MCF 10A (cell line): ENCODE measurements at regions of chr15 and their contacts with region 1.

Region 1: DNA sequence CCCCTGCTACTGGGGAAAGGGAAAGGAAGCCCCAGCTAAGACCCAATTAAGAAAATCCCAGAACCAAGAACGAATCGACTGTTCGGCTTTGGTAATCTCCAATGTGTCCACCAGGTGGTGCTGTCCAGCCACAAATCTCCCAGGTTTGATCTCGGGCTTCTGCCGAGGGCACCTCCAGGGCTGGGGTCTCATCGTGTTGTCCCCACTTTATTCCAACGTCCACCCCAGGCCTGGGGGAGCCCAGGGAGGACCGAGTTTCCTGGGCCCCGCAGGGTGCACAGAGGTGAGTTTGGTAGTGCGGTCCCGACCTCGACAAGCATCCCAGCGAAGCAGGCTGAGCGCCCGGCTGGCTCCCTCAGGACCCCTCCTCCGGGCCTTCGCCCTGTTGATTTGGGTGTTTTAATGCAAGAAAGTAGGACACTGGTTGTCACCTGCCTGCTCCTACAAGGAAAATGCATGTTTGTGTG is 185.1 kb downstream of the GOLGA6L6 start:
- DNase-seq: peak; percentile 75
- H3K4me3 Mint-ChIP-seq: peak overlapping the region; percentile 35
- H3K27ac Mint-ChIP-seq: peak overlapping the region; percentile 16
- H3K4me1 Mint-ChIP-seq: peaks cover 6% of the 10 kb centered on the region
- H3K27me3 Mint-ChIP-seq: no peaks in the 10 kb centered on the region
- CTCF ChIP-seq: peak; percentile 98

Region 2: GRCh38 chr15:19944261-19944888 is 412.1 kb before region 1 on chr15:
- CTCF ChIA-PET with region 1: no interaction called
- POLR2A ChIA-PET with region 1: no interaction called
- intact Hi-C with region 1: no loop called
- DNase-seq: no peak
- H3K4me3 Mint-ChIP-seq: no peak overlapping the region
- H3K27ac Mint-ChIP-seq: no peak overlapping the region
- H3K4me1 Mint-ChIP-seq: no peaks in the 10 kb centered on the region
- H3K27me3 Mint-ChIP-seq: no peaks in the 10 kb centered on the region
- CTCF ChIP-seq: no peak

Region 3: DNA sequence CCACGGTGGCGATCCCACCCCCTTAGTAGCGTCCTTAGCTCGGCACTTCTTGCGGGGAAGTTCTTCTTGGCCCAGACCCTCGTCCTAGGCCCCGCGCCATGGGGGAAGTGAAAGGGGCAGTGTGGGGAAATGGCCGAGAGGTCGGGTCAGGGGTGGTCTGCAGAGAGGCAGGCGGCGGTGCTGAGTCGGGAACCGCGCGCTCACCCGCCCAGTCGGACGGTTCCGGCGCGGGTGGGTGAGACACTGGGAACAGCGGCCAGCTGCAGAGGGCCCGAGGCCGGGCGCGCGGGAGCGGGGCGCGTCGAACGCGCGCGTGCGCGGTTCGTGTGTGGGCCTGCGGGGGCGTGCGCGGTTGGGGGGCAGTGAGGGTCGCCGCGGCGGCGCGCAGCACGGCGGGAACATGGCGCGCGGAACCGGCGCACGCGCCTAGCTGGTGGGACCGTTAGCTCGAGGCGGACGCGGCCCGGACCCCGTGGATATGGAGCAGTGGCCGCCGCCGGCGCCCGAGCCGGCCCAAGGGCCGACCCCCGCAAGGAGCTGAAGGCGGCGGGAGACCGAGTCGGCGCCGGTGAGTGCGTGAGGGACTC is 61.7 kb before region 1 on chr15:
- CTCF ChIA-PET with region 1: no interaction called
- POLR2A ChIA-PET with region 1: no interaction called
- intact Hi-C with region 1: no loop called
- DNase-seq: no peak
- H3K4me3 Mint-ChIP-seq: no peak overlapping the region
- H3K27ac Mint-ChIP-seq: no peak overlapping the region
- H3K4me1 Mint-ChIP-seq: no peaks in the 10 kb centered on the region
- H3K27me3 Mint-ChIP-seq: no peaks in the 10 kb centered on the region
- CTCF ChIP-seq: no peak

Region 4: DNA sequence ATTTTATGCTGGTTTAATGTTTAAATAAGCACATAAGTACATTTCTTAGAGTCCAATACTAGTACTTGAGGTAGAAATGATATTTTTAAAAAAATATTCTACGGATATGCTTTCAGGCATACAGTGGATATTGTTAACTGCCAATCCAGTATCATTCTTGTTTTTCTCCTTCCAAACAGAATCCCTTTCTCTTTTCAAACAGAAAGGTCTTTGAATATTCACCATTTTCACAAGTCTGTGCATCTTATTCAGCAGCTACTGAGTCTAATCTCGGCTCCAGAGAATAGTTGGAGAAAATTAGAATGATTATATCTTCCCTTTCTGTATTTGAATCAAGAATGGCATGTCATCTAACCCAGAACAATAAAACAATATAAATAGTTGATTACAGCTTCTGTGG is 10.6 kb after region 1 on chr15:
- CTCF ChIA-PET with region 1: interaction called, 13 read pairs
- POLR2A ChIA-PET with region 1: no interaction called
- intact Hi-C with region 1: no loop called
- DNase-seq: no peak
- H3K4me3 Mint-ChIP-seq: no peak overlapping the region
- H3K27ac Mint-ChIP-seq: no peak overlapping the region
- H3K4me1 Mint-ChIP-seq: no peaks in the 10 kb centered on the region
- H3K27me3 Mint-ChIP-seq: no peaks in the 10 kb centered on the region
- CTCF ChIP-seq: no peak